Body of pancreas (tissue), 4 donors: ENCODE measurements at regions of chr10 and their contacts with region 1.

Region 1: GRCh38 chr10:43461950-43462349 is 25.0 kb downstream of the ZNF487 start:
- DNase-seq: peak in 2 of 4 donors; percentile 24 to 67
- ATAC-seq: peak; percentile 74
- H3K4me3 ChIP-seq: no peak overlapping the region
- H3K27ac ChIP-seq: no peak overlapping the region
- H3K4me1 ChIP-seq: peaks cover 6% of the 10 kb centered on the region
- H3K27me3 ChIP-seq: no peaks in the 10 kb centered on the region
- CTCF ChIP-seq: peak; percentile 59 to 81 (median 79)
- POLR2A ChIP-seq: no peak

Region 2: GRCh38 chr10:42782446-42783180 is 679.3 kb before region 1 on chr10 and contains the start of gene BMS1:
- intact Hi-C with region 1: loop called (anchors 10 kb)
- DNase-seq: peak; percentile 86 to 91 (median 90)
- ATAC-seq: peak; percentile 94
- H3K4me3 ChIP-seq: peak within 1 kb of the TSS; percentile 50 to 78
- H3K27ac ChIP-seq: peak within 1 kb of the TSS; percentile 85 to 94 (median 88)
- H3K4me1 ChIP-seq: peaks cover 19% of the 10 kb centered on the region
- H3K27me3 ChIP-seq: no peaks in the 10 kb centered on the region
- CTCF ChIP-seq: peak in 2 of 7 experiments; percentile 1 to 16
- POLR2A ChIP-seq: peak; percentile 64 to 92 (median 88)
- total RNA-seq, gene BMS1: 8.0 to 8.6 TPM